ENCODE measurements at regions of chr1 and their contacts with region 1.

Region 1: DNA sequence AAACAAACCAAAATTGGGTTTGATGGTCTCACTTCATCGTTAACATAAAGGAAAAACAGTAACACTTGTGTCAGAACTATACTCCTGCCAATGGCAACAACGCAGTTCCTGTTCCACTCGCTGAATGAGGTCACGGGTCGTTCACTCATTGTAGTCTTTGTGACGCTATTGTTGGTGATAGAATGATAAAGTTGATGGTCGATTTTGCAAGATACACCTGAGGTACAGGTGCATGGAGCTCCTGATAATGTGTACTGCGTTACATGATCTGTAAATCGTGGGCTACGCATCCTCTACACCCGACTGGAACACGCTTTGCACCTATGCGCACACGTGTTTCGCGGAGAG is 391 bp upstream of the CENPS start:
- DNase-seq: no peak
- H3K4me3 ChIP-seq: peak overlapping the region; percentile 61 to 74
- H3K27ac ChIP-seq: peak overlapping the region; percentile 71 to 73
- H3K4me1 ChIP-seq: peaks cover 13% of the 10 kb centered on the region
- H3K27me3 ChIP-seq: no peaks in the 10 kb centered on the region
- CTCF ChIP-seq: no peak
- POLR2A ChIP-seq: no peak

Region 2: DNA sequence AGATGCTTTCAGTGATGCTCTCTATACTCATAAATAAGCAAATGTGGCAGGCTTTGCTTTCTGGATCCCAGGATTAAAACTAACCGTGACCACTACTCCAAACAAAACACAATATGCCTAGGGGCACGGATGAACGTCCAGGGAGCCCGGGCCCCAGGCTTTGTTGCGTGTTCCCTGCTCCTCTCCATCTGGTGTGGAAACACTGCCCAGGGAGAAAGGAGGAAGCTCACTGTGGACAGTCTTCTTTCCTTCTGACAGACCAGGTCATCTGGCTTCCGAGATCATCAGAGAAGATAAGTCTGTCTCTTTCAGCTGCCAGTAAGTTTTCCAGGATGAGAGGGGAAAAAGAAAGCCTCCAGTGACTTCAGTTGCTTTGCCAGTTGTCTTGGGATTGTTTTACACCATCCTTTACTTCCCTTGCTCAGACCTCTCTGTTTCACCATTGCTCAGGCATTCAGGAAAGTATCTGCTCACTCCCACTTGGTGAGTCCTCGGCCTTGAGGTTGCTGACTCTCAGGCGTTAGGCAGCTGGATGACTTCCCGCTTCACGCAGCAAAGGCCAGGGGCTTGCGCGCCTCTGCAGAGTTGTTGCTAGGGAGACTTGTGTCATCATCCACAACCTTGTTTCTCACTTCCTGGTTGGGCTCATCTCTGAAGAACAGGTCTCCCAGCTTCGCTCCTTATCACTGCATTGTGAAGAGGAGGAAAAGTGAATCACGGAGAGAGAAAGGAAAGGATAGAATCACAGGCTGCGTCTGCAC is 51.6 kb before region 1 on chr1:
- intact Hi-C with region 1: loop called (anchors 5 kb)
- DNase-seq: peak; percentile 94
- H3K4me3 ChIP-seq: no peak overlapping the region
- H3K27ac ChIP-seq: peak overlapping the region; percentile 70 to 72
- H3K4me1 ChIP-seq: peaks cover 41% of the 10 kb centered on the region
- H3K27me3 ChIP-seq: no peaks in the 10 kb centered on the region
- CTCF ChIP-seq: no peak
- POLR2A ChIP-seq: no peak

Region 3: DNA sequence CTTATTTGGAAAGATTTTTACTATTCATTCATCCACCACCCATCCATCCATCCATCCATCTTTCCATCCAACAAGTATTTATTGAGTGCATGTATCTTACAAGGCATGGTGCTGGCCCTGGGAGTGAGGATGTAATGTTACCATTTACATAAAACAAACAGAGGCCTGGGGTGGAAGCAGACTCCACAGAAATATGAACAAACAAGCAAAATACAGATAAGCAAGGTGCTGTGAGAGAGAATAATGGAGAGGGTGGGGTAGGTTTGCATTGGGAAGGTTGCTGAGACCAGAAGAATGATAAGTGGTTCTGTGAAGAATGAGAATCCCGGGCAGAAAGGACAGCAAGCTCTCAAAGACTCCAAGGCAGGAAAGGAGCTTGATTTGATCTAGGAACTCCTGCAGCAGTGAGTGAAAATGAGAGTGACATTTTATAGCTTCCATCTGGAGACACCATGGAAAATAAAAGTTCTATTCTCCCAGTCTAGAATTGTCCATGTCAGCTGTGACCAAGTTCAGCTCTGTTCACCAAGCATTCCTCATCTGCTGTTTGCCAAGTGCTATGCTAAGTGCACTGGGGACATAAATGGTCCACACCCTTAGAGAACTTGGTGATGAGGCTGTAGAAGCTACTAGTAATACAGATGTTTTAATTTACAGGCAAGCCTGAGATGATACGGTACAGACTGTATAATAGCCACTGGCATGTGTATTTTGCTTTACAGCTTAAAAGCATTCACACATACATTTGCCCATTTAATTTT is 120.2 kb after region 1 on chr1:
- intact Hi-C with region 1: no loop called
- DNase-seq: no peak
- H3K4me3 ChIP-seq: no peak overlapping the region
- H3K27ac ChIP-seq: no peak overlapping the region
- H3K4me1 ChIP-seq: no peaks in the 10 kb centered on the region
- H3K27me3 ChIP-seq: no peaks in the 10 kb centered on the region
- CTCF ChIP-seq: no peak
- POLR2A ChIP-seq: no peak

Region 4: GRCh38 chr1:10635085-10635896 is 205.4 kb after region 1 on chr1:
- intact Hi-C with region 1: no loop called
- DNase-seq: no peak
- H3K4me3 ChIP-seq: no peak overlapping the region
- H3K27ac ChIP-seq: peak overlapping the region in 1 of 2 donors; percentile 2
- H3K4me1 ChIP-seq: peaks cover 18% of the 10 kb centered on the region
- H3K27me3 ChIP-seq: no peaks in the 10 kb centered on the region
- CTCF ChIP-seq: no peak
- POLR2A ChIP-seq: no peak

Measured in testis (tissue), 5 donors.